ENCODE measurements at regions of chr2 and their contacts with region 1.

Region 1: DNA sequence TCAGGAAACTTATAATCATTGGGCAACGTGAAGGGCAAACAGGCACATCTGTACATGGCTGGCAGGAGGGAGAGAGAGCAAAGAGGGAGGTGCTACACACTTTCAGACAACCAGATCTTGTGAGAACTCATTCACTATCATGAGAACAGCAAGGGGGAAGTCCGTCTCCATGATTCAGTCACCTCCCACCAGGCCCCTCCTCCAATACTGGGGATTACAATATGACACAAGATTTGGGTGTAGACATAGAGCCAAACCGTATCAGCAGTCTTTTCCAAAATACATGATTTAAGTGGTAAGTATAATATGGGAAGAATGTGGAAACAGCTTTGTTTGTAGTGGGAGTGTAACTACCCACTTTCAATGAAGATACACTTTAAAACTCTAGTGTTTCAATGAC is 65.0 kb downstream of the EPB41L5 start:
- DNase-seq: no peak
- ATAC-seq: no peak
- H3K4me3 ChIP-seq: no peak overlapping the region
- H3K4me3 Mint-ChIP-seq: no peak overlapping the region
- H3K27ac ChIP-seq: no peak overlapping the region
- H3K27ac Mint-ChIP-seq: no peak overlapping the region
- H3K4me1 ChIP-seq: no peaks in the 10 kb centered on the region
- H3K4me1 Mint-ChIP-seq: peaks cover 0 to 2% (median 0%) of the 10 kb centered on the region in 3 donors
- H3K27me3 ChIP-seq: no peaks in the 10 kb centered on the region
- H3K27me3 Mint-ChIP-seq: no peaks in the 10 kb centered on the region

Region 2: GRCh38 chr2:120052597-120052996 is 25.3 kb before region 1 on chr2:
- CTCF ChIA-PET with region 1: no interaction called
- POLR2A ChIA-PET with region 1: interaction called in 1 of 2 experiments, 10 read pairs
- DNase-seq: no peak
- ATAC-seq: no peak
- H3K4me3 ChIP-seq: no peak overlapping the region
- H3K4me3 Mint-ChIP-seq: no peak overlapping the region
- H3K27ac ChIP-seq: no peak overlapping the region
- H3K27ac Mint-ChIP-seq: no peak overlapping the region
- H3K4me1 ChIP-seq: no peaks in the 10 kb centered on the region
- H3K4me1 Mint-ChIP-seq: peaks cover 0 to 8% (median 3%) of the 10 kb centered on the region in 3 donors
- H3K27me3 ChIP-seq: no peaks in the 10 kb centered on the region
- H3K27me3 Mint-ChIP-seq: no peaks in the 10 kb centered on the region

Region 3: GRCh38 chr2:120091436-120091835 is 13.5 kb after region 1 on chr2:
- CTCF ChIA-PET with region 1: no interaction called
- POLR2A ChIA-PET with region 1: no interaction called
- DNase-seq: no peak
- ATAC-seq: no peak
- H3K4me3 ChIP-seq: no peak overlapping the region
- H3K4me3 Mint-ChIP-seq: no peak overlapping the region
- H3K27ac ChIP-seq: no peak overlapping the region
- H3K27ac Mint-ChIP-seq: no peak overlapping the region
- H3K4me1 ChIP-seq: no peaks in the 10 kb centered on the region
- H3K4me1 Mint-ChIP-seq: no peaks in the 10 kb centered on the region
- H3K27me3 ChIP-seq: no peaks in the 10 kb centered on the region
- H3K27me3 Mint-ChIP-seq: no peaks in the 10 kb centered on the region